ENCODE measurements at regions of chr13 and their contacts with region 1.

Region 1: DNA sequence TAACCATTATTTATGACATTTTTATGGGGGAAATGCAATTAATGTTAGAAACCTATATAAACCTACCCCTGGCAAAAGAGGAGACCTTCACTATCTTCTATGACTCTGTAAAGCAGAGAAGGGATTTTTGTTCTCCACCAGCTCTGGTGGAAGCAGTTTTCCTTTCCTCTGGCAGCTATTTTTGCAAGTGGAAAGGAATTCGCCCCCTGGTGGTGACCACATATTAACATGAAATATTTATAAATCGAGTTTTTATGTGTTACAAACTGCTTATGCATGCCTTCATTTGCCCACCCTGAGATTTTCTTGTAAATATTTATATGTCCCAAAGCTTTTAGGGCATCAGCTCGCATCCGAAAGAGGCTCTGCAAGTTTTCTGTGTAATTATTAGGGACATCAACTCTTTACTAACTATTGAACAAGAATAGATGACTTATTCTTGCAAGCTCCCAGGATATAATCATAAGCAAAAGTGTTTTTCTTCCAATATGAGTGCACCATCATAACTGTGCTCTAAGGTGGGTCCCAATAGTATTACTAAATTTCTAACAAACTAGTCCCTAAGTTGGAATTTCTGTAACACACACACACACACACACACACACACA is 62.4 kb downstream of the SERTM1 start:
- DNase-seq: no peak
- H3K4me3 ChIP-seq: no peak overlapping the region
- H3K27ac ChIP-seq: no peak overlapping the region
- H3K4me1 ChIP-seq: no peaks in the 10 kb centered on the region
- H3K27me3 ChIP-seq: no peaks in the 10 kb centered on the region
- CTCF ChIP-seq: peak; percentile 63 to 65

Region 2: DNA sequence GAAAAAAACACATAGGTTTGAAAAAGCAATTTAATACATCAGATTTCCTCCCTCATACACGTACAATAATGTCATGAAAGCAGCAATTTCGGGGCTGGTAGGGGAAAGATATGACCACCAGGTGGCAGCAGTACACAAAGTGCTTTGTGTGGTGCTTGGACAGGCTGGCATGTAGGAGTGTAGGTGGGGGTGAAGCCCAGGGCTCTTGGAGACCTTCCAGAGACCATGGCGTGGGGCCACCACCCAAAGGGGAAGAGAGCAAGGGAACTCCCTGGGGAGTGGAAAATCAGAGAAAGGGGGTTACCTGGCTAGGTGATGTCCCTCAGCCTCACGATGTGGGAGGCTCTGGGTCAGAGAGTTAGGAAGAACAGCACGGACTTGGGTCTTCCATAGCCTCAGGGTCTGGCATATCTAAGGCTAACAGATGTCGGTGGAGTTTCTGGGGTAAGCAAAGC is 315.8 kb before region 1 on chr13:
- intact Hi-C with region 1: loop called (anchors 5 kb)
- DNase-seq: peak; percentile 70 to 76
- H3K4me3 ChIP-seq: no peak overlapping the region
- H3K27ac ChIP-seq: no peak overlapping the region
- H3K4me1 ChIP-seq: no peaks in the 10 kb centered on the region
- H3K27me3 ChIP-seq: peaks cover 0 to 11% of the 10 kb centered on the region in 2 donors
- CTCF ChIP-seq: peak; percentile 64 to 88